Calu3 (cell line): ENCODE measurements at regions of chrX and their contacts with region 1.

Region 1: GRCh38 chrX:53031380-53031779 is 17.2 kb upstream of the GPR173 start:
- DNase-seq: no peak
- H3K4me3 Mint-ChIP-seq: no peak overlapping the region
- H3K27ac Mint-ChIP-seq: no peak overlapping the region
- H3K4me1 Mint-ChIP-seq: no peaks in the 10 kb centered on the region
- H3K27me3 Mint-ChIP-seq: peaks cover 33% of the 10 kb centered on the region
- CTCF ChIP-seq: no peak

Region 2: GRCh38 chrX:53421772-53422085 is 390.3 kb after region 1 on chrX:
- CTCF ChIA-PET with region 1: interaction called, 10 read pairs
- intact Hi-C with region 1: no loop called
- DNase-seq: no peak
- H3K4me3 Mint-ChIP-seq: peak overlapping the region; percentile 81
- H3K27ac Mint-ChIP-seq: peak overlapping the region; percentile 90
- H3K4me1 Mint-ChIP-seq: peaks cover 13% of the 10 kb centered on the region
- H3K27me3 Mint-ChIP-seq: no peaks in the 10 kb centered on the region
- CTCF ChIP-seq: no peak